Activated CD4-positive, alpha-beta T cell treated with anti-CD3 and anti-CD28 coated beads for 36 hours (primary cell): ENCODE measurements at regions of chr3 and their contacts with region 1.

Region 1: DNA sequence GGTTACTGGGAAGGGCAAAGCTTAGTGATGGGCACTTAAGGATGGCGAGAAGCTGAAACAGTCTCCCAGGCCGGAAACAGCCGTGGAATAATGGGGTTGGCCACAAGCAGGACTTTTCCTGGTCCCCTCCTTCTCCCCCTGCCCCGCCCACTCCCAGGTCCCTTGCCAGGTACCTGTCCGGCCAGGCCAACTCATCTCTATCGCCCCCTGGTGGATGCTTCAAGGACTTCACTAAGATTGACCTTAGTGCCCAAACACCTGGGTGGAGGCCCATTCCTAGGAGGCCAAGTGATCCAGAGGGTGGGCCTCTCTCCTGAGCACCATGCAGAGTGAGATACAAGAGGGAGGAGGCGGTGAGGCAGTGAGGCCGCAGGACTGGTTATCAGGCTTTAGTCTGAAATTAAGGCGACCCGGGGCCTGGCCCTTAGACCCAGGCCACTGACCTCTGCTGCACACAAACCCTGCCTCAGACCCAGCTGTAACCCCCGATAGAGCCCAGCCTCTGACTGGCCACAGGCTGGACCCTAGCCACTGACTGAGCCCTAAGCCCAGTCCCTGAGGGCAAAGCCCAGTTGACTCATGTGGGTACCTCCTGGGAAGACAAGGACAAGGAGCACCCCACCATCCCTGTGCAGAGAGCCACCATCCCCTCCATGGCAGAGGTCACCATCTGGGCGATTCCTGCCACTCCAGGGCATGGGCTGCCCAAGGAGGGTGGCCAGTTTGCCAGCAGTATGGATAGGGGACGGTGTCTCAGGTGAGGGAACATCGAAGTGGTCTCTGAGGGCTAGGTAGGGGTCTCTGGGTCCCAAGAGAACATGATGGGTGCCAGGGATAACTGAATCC is 37.6 kb downstream of the VIPR1 start:
- DNase-seq: peak; percentile 78
- ATAC-seq: peak; percentile 73
- H3K4me3 Mint-ChIP-seq: no peak overlapping the region
- H3K27ac Mint-ChIP-seq: no peak overlapping the region
- H3K4me1 Mint-ChIP-seq: peaks cover 4% of the 10 kb centered on the region
- H3K27me3 Mint-ChIP-seq: no peaks in the 10 kb centered on the region

Region 2: DNA sequence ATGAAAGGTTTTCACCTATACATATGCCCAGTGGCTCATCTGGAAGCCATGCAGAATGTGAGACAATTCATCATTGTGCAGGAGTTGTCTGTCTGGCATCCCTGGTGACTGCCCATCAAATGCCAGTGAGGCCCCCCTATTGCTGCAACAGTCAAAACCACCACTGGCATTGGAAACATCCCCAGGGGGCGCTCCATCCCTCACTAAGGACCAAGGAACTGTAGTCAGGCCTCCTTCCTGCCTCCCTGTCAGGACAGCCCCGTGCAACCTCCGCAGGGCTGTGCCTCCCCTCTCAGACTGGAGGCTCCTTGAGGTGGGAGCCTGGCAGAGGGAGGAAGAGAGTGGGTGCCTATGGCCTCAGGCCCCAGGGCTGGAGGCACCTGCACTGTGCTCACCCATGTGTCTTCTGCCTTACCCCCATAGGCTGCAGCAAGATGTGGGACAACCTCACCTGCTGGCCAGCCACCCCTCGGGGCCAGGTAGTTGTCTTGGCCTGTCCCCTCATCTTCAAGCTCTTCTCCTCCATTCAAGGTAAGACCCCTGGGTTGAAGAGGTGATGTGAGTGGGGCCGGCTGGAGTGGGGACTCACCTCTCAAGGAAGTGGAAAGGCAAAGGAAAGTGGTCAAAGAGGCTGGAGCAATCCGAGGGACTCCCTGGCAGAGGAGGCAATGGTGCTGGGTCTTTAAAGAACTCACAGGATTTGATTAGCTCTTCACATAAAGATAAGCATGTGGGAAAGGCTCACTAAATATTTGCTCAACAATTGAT is 21.1 kb before region 1 on chr3:
- CTCF ChIA-PET with region 1: interaction called, 4 read pairs
- POLR2A ChIA-PET with region 1: no interaction called
- intact Hi-C with region 1: loop called in 1 of 2 experiments (anchors 1 kb)
- DNase-seq: peak; percentile 53
- ATAC-seq: no peak
- H3K4me3 Mint-ChIP-seq: no peak overlapping the region
- H3K27ac Mint-ChIP-seq: no peak overlapping the region
- H3K4me1 Mint-ChIP-seq: peaks cover 27% of the 10 kb centered on the region
- H3K27me3 Mint-ChIP-seq: no peaks in the 10 kb centered on the region

Region 3: GRCh38 chr3:42667523-42668412 is 127.7 kb after region 1 on chr3:
- CTCF ChIA-PET with region 1: no interaction called
- POLR2A ChIA-PET with region 1: no interaction called
- intact Hi-C with region 1: no loop called
- DNase-seq: no peak
- ATAC-seq: no peak
- H3K4me3 Mint-ChIP-seq: no peak overlapping the region
- H3K27ac Mint-ChIP-seq: no peak overlapping the region
- H3K4me1 Mint-ChIP-seq: no peaks in the 10 kb centered on the region
- H3K27me3 Mint-ChIP-seq: no peaks in the 10 kb centered on the region